PC-3 (cell line): ENCODE measurements at regions of chr10 and their contacts with region 1.

Region 1: GRCh38 chr10:17742918-17743317 is 9.1 kb upstream of the TMEM236 start:
- DNase-seq: peak; percentile 49
- ATAC-seq: no peak; the same call in 1 of the 2 replicates
- H3K4me3 ChIP-seq: no peak overlapping the region
- H3K27ac ChIP-seq: no peak overlapping the region
- H3K4me1 ChIP-seq: no peaks in the 10 kb centered on the region
- H3K27me3 ChIP-seq: no peaks in the 10 kb centered on the region
- CTCF ChIP-seq: peak; percentile 55

Region 2: DNA sequence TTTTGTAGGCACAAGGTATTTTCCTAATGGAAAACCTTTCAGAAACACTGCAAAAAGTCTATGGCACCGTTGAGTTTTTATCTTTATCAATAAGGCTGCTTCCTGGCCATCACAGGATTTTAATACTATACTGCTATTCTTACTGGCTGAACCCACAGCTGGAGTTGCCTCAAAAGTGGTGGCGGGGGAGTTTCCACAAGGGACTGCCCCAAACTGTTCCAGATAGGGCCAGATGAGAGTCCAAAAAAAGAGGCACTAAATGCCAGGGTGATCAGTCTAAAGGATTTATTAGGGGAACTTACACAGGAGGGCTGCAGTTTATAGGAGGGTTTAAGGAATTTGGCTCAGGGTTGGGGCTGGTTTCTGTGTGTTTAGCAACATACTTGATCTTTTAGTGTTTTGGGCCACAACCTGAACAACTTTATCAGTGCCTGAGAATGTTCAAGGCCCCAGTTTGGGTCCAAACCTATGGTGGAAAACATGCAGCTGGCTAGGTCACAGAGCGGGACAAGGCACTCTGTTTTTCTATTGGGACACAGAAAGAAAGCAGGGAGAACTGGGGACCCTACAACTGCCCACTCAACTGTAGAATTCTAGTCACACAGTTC is 57.6 kb before region 1 on chr10:
- CTCF ChIA-PET with region 1: no interaction called
- POLR2A ChIA-PET with region 1: no interaction called
- intact Hi-C with region 1: no loop called
- DNase-seq: no peak
- ATAC-seq: no peak
- H3K4me3 ChIP-seq: no peak overlapping the region
- H3K27ac ChIP-seq: no peak overlapping the region
- H3K4me1 ChIP-seq: no peaks in the 10 kb centered on the region
- H3K27me3 ChIP-seq: no peaks in the 10 kb centered on the region
- CTCF ChIP-seq: no peak

Region 3: GRCh38 chr10:17730667-17731066 is 12.3 kb before region 1 on chr10:
- CTCF ChIA-PET with region 1: no interaction called
- POLR2A ChIA-PET with region 1: no interaction called
- intact Hi-C with region 1: no loop called
- DNase-seq: no peak
- ATAC-seq: no peak
- H3K4me3 ChIP-seq: no peak overlapping the region
- H3K27ac ChIP-seq: no peak overlapping the region
- H3K4me1 ChIP-seq: no peaks in the 10 kb centered on the region
- H3K27me3 ChIP-seq: no peaks in the 10 kb centered on the region
- CTCF ChIP-seq: no peak

Region 4: DNA sequence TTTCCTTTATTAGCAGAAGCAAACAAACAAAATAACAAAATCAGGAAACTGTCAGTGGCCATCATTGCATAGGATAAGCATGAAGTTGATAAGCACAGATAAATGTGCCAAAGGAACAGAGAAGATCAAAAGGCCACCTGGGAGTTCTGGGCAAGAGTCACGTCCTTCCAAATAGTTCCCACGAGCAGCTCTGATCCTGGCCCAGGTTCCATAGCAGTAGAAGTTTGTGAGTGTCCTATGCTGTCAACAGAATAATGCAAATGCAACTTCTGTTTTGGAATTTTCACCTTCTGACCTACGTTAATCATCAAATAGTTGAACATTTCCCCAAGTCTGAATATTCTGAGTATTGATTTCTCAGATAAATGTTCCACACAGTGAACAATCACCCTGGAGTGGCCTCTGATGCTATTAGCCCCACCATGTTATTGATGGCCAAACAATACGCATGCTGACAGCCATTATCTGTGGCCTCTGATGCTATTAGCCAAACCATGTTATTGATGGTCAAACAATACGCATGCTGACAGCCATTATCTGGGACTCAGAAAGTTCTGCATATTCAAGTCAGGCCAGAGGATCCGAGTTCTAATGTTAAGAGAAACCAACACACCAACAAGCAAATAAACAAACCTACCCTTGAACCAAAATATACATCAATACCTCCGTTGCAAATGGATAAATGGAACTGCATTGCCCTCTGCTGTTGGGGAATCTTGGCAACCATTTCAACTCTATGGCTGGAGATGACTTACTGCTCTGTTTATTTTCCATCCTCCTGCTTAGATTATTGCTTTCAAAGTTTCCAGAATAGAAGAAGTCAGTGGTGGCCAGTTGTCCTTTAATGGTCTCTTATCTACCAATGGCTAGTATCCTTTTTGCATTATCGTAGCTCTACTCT is 129.5 kb after region 1 on chr10:
- CTCF ChIA-PET with region 1: no interaction called
- POLR2A ChIA-PET with region 1: no interaction called
- intact Hi-C with region 1: loop called (anchors 5 kb)
- DNase-seq: peak; percentile 44
- ATAC-seq: 0 out of 2 replicates have a peak, but pooled peaks have one; percentile 40
- H3K4me3 ChIP-seq: no peak overlapping the region
- H3K27ac ChIP-seq: no peak overlapping the region
- H3K4me1 ChIP-seq: no peaks in the 10 kb centered on the region
- H3K27me3 ChIP-seq: no peaks in the 10 kb centered on the region
- CTCF ChIP-seq: peak; percentile 59